ENCODE measurements at regions of chr3 and their contacts with region 1.

Region 1: GRCh38 chr3:12841149-12841970 is at the start of gene RPL32:
- DNase-seq: peak; percentile 90
- ATAC-seq: peak; percentile 94
- H3K4me3 Mint-ChIP-seq: peak within 1 kb of the TSS; percentile 96
- H3K27ac Mint-ChIP-seq: peak within 1 kb of the TSS; percentile 99
- H3K4me1 Mint-ChIP-seq: peaks cover 32% of the 10 kb centered on the region
- H3K27me3 Mint-ChIP-seq: no peaks in the 10 kb centered on the region
- CTCF ChIP-seq: peak; percentile 82
- total RNA-seq, gene RPL32: 2,861 to 2,981 TPM

Region 2: DNA sequence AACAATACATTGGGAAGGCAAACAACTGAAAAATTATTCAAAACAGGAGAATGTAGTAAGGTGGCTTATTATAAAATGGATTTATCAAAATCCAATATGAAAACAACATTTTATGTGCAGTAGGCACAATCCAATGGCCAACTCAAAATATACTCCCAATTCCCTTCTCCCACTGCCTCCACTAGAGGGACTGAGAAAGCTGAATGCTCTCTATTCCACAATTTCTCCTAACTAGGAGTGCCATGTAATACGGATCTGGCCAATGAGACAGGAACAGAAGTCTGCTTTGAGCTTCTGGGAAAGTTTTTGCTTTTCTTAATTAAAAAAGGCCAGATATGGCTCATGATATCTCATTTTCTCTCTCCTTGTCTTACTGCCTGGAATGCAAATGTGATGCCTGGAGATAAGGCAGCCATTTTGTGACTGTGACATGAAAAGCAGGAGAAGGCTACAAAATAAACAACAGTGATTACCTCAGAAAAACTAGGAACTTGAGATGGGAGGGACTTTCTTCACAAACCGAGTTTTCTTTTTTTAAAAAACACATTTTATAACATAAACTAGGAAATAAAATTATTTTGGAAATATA is 1178.9 kb before region 1 on chr3:
- CTCF ChIA-PET with region 1: no interaction called
- POLR2A ChIA-PET with region 1: no interaction called
- intact Hi-C with region 1: no loop called
- DNase-seq: no peak
- ATAC-seq: no peak
- H3K4me3 Mint-ChIP-seq: no peak overlapping the region
- H3K27ac Mint-ChIP-seq: no peak overlapping the region
- H3K4me1 Mint-ChIP-seq: no peaks in the 10 kb centered on the region
- H3K27me3 Mint-ChIP-seq: no peaks in the 10 kb centered on the region
- CTCF ChIP-seq: no peak

Region 3: DNA sequence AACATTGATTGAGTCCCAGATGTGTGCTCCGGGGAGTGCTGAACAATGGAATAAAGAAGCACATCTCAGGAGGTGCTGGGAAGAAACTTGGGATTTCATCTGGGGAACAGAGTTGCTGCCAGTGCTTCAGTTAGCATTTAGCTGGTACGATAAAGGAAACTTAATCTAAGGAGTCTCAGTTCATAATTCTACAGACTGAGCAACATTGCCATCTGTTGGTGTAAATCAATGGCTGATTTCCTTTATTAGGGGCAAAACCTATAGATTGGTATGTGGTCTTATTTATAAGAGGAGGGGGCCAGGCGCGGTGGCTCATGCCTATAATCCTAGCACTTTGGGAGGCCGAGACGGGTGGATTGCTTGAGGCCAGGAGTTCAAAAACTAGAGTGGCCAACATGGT is 304.9 kb before region 1 on chr3:
- CTCF ChIA-PET with region 1: no interaction called
- POLR2A ChIA-PET with region 1: no interaction called
- intact Hi-C with region 1: no loop called
- DNase-seq: no peak
- ATAC-seq: no peak
- H3K4me3 Mint-ChIP-seq: no peak overlapping the region
- H3K27ac Mint-ChIP-seq: no peak overlapping the region
- H3K4me1 Mint-ChIP-seq: peaks cover 5% of the 10 kb centered on the region
- H3K27me3 Mint-ChIP-seq: no peaks in the 10 kb centered on the region
- CTCF ChIP-seq: no peak

Region 4: DNA sequence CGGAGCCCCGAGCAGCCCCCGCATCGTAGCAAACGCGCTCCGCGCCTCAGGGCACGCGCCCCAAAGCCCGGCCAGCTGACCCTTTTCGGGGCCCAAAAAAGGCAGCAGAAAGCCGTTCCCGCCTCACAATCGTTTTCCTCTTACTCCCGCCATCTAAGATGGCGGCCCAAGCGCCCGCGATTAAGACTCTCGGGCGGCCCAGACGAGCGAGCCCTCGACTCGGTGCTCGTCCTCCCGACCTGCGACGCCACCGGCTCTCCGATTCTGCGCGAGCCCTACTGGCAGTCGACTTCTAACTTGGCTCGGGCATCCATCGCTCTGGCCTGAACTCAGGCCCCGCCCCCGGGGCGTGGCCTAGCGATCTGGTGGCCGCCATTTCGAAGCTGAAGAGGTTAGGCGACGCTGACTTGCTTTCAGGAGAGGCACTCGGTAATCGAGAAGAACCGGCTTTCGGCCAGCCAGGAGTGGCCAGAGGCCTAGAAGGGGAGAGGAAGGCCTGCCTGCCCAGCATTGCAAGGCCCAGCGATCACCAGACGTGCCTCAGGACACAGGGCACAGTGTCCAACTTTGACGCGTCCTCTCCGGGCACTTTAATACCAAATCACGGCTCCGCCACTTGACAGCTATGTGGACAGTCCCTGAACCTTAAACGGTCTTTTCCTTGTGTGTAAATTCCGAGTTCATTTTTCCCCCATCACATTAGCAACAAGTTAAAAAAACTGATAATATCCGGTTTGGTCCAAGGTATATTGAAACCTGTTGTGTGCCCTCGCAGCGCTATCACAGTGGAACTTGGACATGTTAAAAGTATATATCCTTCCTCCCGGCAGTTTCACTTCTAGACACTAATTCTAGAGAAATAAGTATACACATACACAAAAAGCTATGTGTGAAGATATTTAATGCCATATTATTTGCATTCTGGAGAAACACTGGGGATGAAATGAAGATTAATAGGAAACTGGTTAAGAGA is 177.1 kb before region 1 on chr3 and contains the start of gene RAF1:
- CTCF ChIA-PET with region 1: interaction called, 3 read pairs
- POLR2A ChIA-PET with region 1: interaction called, 16 read pairs
- intact Hi-C with region 1: no loop called
- DNase-seq: peak; percentile 99
- ATAC-seq: peak; percentile 94
- H3K4me3 Mint-ChIP-seq: peak within 1 kb of the TSS; percentile 85
- H3K27ac Mint-ChIP-seq: peak within 1 kb of the TSS; percentile 90
- H3K4me1 Mint-ChIP-seq: peaks cover 29% of the 10 kb centered on the region
- H3K27me3 Mint-ChIP-seq: no peaks in the 10 kb centered on the region
- CTCF ChIP-seq: no peak
- total RNA-seq, gene RAF1: 71.1 to 74.9 TPM

Region 5: DNA sequence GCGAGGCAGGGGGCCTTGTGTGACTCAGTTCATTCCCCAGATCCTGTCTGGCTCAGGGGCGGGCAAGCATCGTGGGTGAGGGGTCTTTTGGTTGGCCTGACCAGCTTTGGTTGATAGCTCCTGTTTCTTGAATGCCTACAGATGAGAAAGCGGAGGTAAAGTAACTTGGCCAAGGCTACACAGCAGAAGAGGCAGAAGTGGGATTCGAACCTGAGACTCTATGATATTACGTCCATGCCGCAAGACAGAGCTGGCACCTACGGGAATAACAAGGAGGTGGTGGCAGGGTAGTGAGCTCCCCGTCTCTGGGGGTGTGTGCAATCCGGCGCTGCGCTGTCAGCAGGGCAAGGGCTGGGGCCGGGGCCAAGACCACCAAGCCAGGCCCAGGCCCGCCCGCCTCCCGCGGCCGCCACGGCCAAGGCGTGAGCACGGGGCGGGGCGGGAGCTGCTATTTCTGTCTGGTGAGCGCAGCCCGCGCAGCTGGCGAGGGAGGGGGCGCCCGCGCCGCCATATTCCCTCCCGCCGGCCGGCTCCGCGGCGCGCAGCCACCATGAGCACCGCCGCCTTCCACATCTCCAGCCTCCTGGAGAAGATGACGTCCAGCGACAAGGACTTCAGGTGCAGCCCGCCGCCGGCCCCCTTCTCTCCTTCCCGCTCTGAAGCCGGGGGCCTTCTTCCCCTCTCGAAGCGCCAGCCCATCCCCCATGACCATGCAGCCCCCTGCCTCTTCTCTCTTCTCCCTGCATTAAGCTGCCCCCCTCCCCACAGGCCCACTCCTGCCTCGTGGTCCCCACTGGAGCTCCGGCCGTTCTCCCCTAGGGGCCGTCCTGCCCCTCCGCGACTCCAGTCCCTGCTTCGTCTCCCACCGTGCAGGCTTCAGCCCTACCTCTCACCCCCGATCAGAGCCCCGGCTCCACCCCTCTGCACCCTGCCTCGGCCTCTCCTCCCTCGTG is 44.9 kb before region 1 on chr3 and contains the start of gene CAND2:
- CTCF ChIA-PET with region 1: interaction called, 4 read pairs
- POLR2A ChIA-PET with region 1: interaction called, 24 read pairs
- intact Hi-C with region 1: no loop called
- DNase-seq: peak; percentile 53
- ATAC-seq: peak; percentile 81
- H3K4me3 Mint-ChIP-seq: peak within 1 kb of the TSS; percentile 70
- H3K27ac Mint-ChIP-seq: no peak within 1 kb of the TSS
- H3K4me1 Mint-ChIP-seq: peaks cover 3% of the 10 kb centered on the region
- H3K27me3 Mint-ChIP-seq: peaks cover 3% of the 10 kb centered on the region
- CTCF ChIP-seq: no peak
- total RNA-seq, gene CAND2: 1.5 to 1.9 TPM

Region 6: DNA sequence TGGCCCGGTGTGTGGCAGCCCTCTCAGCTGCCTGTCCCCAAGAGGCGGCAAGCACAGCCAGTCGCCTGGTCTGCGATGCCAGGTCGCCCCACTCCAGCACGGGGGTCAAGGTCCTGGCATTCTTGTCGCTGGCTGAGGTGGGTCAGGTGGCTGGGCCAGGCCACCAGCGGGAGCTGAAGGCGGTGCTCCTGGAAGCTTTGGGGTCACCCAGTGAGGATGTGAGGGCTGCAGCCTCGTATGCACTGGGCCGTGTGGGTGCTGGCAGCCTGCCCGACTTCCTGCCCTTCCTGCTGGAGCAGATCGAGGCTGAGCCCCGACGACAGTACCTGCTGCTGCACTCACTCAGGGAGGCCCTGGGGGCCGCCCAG is 24.0 kb before region 1 on chr3:
- CTCF ChIA-PET with region 1: interaction called, 7 read pairs
- POLR2A ChIA-PET with region 1: interaction called, 155 read pairs
- intact Hi-C with region 1: no loop called
- DNase-seq: no peak
- ATAC-seq: no peak
- H3K4me3 Mint-ChIP-seq: no peak overlapping the region
- H3K27ac Mint-ChIP-seq: no peak overlapping the region
- H3K4me1 Mint-ChIP-seq: no peaks in the 10 kb centered on the region
- H3K27me3 Mint-ChIP-seq: no peaks in the 10 kb centered on the region
- CTCF ChIP-seq: no peak

Region 7: DNA sequence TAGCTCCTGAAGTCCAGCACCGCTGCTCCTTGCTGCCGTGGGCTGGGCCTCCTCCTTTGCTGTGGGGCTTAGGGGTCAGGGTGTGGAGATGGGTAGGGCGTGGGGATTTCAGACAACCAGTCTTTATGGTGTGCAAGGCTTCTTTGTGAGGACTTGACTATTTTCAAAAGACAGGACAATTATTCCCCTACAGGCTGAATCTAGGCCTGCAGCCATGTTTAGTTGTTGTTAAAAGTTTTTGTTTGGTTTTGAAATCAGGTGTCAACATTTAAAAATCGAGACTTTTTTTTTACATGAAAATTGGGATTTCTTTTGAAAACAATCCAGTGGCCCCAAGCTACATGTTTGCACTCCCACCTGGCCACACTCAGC is 10.6 kb before region 1 on chr3:
- CTCF ChIA-PET with region 1: interaction called, 36 read pairs
- POLR2A ChIA-PET with region 1: interaction called, 103 read pairs
- intact Hi-C with region 1: no loop called
- DNase-seq: no peak
- ATAC-seq: no peak
- H3K4me3 Mint-ChIP-seq: no peak overlapping the region
- H3K27ac Mint-ChIP-seq: no peak overlapping the region
- H3K4me1 Mint-ChIP-seq: no peaks in the 10 kb centered on the region
- H3K27me3 Mint-ChIP-seq: no peaks in the 10 kb centered on the region
- CTCF ChIP-seq: peak; percentile 49

Region 8: DNA sequence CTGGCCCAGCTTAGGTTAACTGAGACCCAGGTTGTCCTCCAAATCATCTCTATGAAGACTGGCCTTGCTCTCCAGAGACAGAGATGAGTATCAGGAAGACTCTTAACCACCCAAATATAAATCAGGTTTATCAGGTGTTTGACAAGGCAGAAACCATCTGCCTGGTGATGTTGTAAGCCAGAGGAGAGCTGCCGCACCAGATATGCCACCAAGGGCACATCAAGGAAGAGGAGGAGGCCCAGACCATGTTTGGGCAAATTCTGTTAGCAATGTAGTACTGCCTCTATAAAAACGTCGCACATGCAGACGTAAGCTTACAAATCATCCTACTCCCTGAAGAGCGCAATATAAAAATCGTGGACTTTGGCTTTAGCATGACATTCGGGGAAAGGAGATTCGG is 21.0 kb after region 1 on chr3:
- CTCF ChIA-PET with region 1: interaction called, 12 read pairs
- POLR2A ChIA-PET with region 1: interaction called, 12 read pairs
- intact Hi-C with region 1: no loop called
- DNase-seq: no peak
- ATAC-seq: no peak
- H3K4me3 Mint-ChIP-seq: no peak overlapping the region
- H3K27ac Mint-ChIP-seq: no peak overlapping the region
- H3K4me1 Mint-ChIP-seq: no peaks in the 10 kb centered on the region
- H3K27me3 Mint-ChIP-seq: peaks cover 1% of the 10 kb centered on the region
- CTCF ChIP-seq: no peak

Region 9: GRCh38 chr3:12891985-12892839 is 50.9 kb after region 1 on chr3:
- CTCF ChIA-PET with region 1: interaction called, 25 read pairs
- POLR2A ChIA-PET with region 1: interaction called, 6 read pairs
- intact Hi-C with region 1: no loop called
- DNase-seq: peak; percentile 67
- ATAC-seq: peak; percentile 71
- H3K4me3 Mint-ChIP-seq: no peak overlapping the region
- H3K27ac Mint-ChIP-seq: no peak overlapping the region
- H3K4me1 Mint-ChIP-seq: peaks cover 10% of the 10 kb centered on the region
- H3K27me3 Mint-ChIP-seq: peaks cover 10% of the 10 kb centered on the region
- CTCF ChIP-seq: peak; percentile 97